HEK293 (cell line): ENCODE measurements at regions of chr19 and their contacts with region 1.

Region 1: DNA sequence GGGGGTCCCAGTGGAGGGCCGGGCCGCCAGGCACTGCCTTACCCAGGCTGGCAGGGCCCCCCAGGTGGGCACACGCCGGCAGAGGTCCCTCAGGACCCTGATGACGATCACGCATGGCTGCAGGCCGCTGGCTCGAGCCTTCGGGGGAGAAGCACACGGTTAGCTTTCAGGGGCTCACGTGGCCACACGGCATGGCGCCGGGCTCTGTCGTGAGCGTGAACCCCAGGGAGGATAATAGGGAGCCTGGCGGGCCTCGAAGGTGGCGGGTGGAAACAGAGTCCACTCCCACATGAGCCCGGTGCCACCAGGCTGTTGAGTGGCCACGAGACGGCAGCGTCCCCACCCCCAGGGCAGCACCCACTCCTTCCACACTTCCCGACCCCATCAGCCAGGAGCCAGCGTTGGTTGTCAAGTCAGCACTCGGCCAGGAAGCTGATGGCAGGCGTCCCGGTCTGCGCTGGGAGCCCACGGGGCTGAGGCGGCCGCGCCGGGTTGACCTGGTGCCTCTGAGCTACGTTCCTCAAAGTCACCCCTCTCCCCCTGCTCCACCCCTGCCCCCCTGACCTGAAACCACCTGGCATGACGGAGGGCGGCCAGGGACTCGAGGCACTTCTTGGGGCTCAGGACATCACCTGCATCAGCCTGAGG is 24.7 kb upstream of the MATK start:
- H3K4me3 ChIP-seq: no peak overlapping the region
- H3K27ac ChIP-seq: no peak overlapping the region
- H3K4me1 ChIP-seq: no peaks in the 10 kb centered on the region
- CTCF ChIP-seq: no peak

Region 2: GRCh38 chr19:3798137-3798536 is 12.7 kb before region 1 on chr19:
- CTCF ChIA-PET with region 1: no interaction called
- POLR2A ChIA-PET with region 1: interaction called, 12 read pairs
- H3K4me3 ChIP-seq: no peak overlapping the region
- H3K27ac ChIP-seq: no peak overlapping the region
- H3K4me1 ChIP-seq: peaks cover 2% of the 10 kb centered on the region; the same call in 1 of the 2 replicates
- CTCF ChIP-seq: no peak

Region 3: GRCh38 chr19:3821857-3822364 is 11.1 kb after region 1 on chr19:
- CTCF ChIA-PET with region 1: interaction called, 15 read pairs
- POLR2A ChIA-PET with region 1: no interaction called
- H3K4me3 ChIP-seq: no peak overlapping the region
- H3K27ac ChIP-seq: no peak overlapping the region
- H3K4me1 ChIP-seq: no peaks in the 10 kb centered on the region
- CTCF ChIP-seq: peak; percentile 95